Activated B cell treated with CpG ODN at 0.5 μM for 24 hours (primary cell): ENCODE measurements at regions of chr4 and their contacts with region 1.

Region 1: DNA sequence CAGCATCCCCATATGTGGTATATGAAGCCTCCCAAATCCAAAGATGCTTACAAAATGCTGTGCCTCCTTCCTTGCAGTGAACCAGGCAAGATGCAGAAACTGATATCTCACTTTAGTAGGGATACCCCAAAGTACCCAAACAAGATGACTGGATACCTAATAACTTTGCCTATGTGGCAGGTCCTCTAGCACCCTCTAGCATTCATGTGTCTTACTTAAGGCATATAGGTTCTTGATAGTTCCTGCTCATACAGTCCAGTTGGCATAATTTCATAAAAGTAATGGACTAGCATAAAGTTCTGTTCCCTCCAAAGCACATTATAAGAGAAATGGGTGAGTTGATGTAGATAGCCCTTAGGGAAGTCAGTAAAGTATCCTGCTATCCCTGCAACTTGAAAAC is 36.8 kb upstream of the SPP1 start:
- DNase-seq: no peak
- ATAC-seq: no peak
- H3K4me3 Mint-ChIP-seq: no peak overlapping the region
- H3K27ac Mint-ChIP-seq: no peak overlapping the region
- H3K4me1 Mint-ChIP-seq: no peaks in the 10 kb centered on the region
- H3K27me3 Mint-ChIP-seq: no peaks in the 10 kb centered on the region
- CTCF ChIP-seq: no peak

Region 2: GRCh38 chr4:87872028-87872427 is 66.7 kb before region 1 on chr4:
- CTCF ChIA-PET with region 1: no interaction called
- POLR2A ChIA-PET with region 1: no interaction called
- intact Hi-C with region 1: no loop called
- DNase-seq: no peak
- ATAC-seq: no peak
- H3K4me3 Mint-ChIP-seq: no peak overlapping the region
- H3K27ac Mint-ChIP-seq: no peak overlapping the region
- H3K4me1 Mint-ChIP-seq: no peaks in the 10 kb centered on the region
- H3K27me3 Mint-ChIP-seq: peaks cover 9% of the 10 kb centered on the region
- CTCF ChIP-seq: no peak

Region 3: GRCh38 chr4:87926554-87927098 is 12.1 kb before region 1 on chr4:
- CTCF ChIA-PET with region 1: interaction called, 4 read pairs
- POLR2A ChIA-PET with region 1: no interaction called
- intact Hi-C with region 1: loop called (anchors 1 kb)
- DNase-seq: no peak
- ATAC-seq: no peak
- H3K4me3 Mint-ChIP-seq: no peak overlapping the region
- H3K27ac Mint-ChIP-seq: no peak overlapping the region
- H3K4me1 Mint-ChIP-seq: no peaks in the 10 kb centered on the region
- H3K27me3 Mint-ChIP-seq: peaks cover 6% of the 10 kb centered on the region
- CTCF ChIP-seq: no peak

Region 4: DNA sequence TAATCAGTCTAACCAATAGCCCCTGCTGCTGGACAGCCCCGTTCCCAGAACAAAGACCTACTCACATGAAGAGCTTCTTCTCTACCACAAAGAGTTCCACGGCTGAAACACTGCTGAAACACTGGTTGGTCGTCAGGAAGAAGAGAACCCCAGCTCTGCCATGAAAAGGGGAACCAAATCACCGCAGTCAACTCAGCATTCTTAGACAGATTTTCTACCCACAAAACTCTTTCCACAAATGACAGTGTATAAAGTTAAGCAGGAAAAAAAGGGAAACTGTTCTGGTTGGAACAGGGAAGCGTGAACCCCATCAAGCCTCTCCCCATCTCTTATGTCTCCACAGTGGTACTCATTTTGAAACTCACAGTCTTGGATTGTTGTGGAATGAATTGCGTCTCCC is 162.4 kb after region 1 on chr4:
- CTCF ChIA-PET with region 1: no interaction called
- POLR2A ChIA-PET with region 1: no interaction called
- intact Hi-C with region 1: no loop called
- DNase-seq: no peak
- ATAC-seq: no peak
- H3K4me3 Mint-ChIP-seq: no peak overlapping the region
- H3K27ac Mint-ChIP-seq: no peak overlapping the region
- H3K4me1 Mint-ChIP-seq: no peaks in the 10 kb centered on the region
- H3K27me3 Mint-ChIP-seq: peaks cover 3% of the 10 kb centered on the region
- CTCF ChIP-seq: no peak